CD14-positive monocyte (primary cell): ENCODE measurements at regions of chr1 and their contacts with region 1.

Region 1: GRCh38 chr1:234730770-234731568 is 121.0 kb upstream of the IRF2BP2 start:
- DNase-seq: peak in 2 of 3 donors; percentile 83 to 86
- H3K4me3 ChIP-seq: peak overlapping the region in 1 of 3 experiments; percentile 7
- H3K4me3 Mint-ChIP-seq: no peak overlapping the region
- H3K27ac ChIP-seq: peak overlapping the region; percentile 15 to 74
- H3K27ac Mint-ChIP-seq: peak overlapping the region; percentile 76 to 94 (median 85)
- H3K4me1 ChIP-seq: peaks cover 59 to 64% of the 10 kb centered on the region in 2 donors
- H3K4me1 Mint-ChIP-seq: peaks cover 74% of the 10 kb centered on the region
- H3K27me3 ChIP-seq: no peaks in the 10 kb centered on the region
- H3K27me3 Mint-ChIP-seq: peaks cover 0 to 2% (median 0%) of the 10 kb centered on the region in 3 donors
- CTCF ChIP-seq: no peak

Region 2: GRCh38 chr1:234772345-234773147 is 41.6 kb after region 1 on chr1:
- intact Hi-C with region 1: loop called (anchors 2 to 5 kb)
- DNase-seq: peak; percentile 98 to 100 (median 99)
- H3K4me3 ChIP-seq: peak overlapping the region in 1 of 3 experiments; percentile 17
- H3K4me3 Mint-ChIP-seq: peak overlapping the region; percentile 52 to 75
- H3K27ac ChIP-seq: peak overlapping the region; percentile 94 to 98
- H3K27ac Mint-ChIP-seq: peak overlapping the region in 4 of 7 donors; percentile 96 to 100 (median 99)
- H3K4me1 ChIP-seq: peaks cover 88 to 92% of the 10 kb centered on the region in 2 donors
- H3K4me1 Mint-ChIP-seq: peaks cover 51% of the 10 kb centered on the region
- H3K27me3 ChIP-seq: no peaks in the 10 kb centered on the region
- H3K27me3 Mint-ChIP-seq: no peaks in the 10 kb centered on the region
- CTCF ChIP-seq: no peak